ENCODE measurements at regions of chr7 and their contacts with region 1.

Region 1: DNA sequence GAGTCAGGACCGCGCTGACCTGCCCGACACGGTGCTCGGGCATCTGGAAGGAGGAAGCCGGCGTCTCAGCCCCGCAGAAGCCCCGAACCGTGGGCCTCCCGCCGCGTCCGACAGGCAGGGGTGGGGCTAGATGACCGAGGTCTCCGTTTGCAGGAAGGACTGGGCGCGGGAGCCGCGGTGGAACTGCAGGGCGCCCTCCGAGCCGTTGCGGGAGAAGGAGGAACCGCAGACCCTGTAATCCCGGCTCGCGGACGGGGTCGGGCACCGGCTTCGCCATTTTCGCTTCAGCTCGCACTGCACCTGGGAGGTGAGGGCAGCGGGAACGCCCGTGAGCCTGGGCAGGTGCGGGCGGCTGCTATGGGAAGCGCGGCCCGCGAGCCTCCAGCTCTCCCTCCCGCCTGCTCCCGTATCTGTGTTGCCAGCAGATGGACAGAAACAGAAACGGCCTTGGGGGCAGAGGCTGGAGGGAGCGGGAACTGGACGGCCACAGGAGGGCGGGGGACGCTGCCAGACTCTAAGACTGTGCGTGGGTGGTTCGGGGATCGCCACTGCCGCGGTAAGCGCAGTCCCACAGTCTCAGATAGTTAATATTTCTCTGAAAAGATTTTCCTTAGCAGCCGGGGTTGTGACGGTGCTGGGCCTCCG is 114.1 kb downstream of the VIPR2 start:
- DNase-seq: peak; percentile 60 to 62
- ATAC-seq: peak; percentile 53 to 77 (median 69)
- H3K4me3 ChIP-seq: peak overlapping the region; percentile 32 to 67 (median 56)
- H3K27ac ChIP-seq: peak overlapping the region; percentile 34 to 84 (median 75)
- H3K4me1 ChIP-seq: peaks cover 0 to 37% (median 17%) of the 10 kb centered on the region in 9 donors
- H3K27me3 ChIP-seq: peaks cover 0 to 25% (median 0%) of the 10 kb centered on the region in 7 donors
- CTCF ChIP-seq: peak in 8 of 9 donors; percentile 7 to 58 (median 46)

Region 2: DNA sequence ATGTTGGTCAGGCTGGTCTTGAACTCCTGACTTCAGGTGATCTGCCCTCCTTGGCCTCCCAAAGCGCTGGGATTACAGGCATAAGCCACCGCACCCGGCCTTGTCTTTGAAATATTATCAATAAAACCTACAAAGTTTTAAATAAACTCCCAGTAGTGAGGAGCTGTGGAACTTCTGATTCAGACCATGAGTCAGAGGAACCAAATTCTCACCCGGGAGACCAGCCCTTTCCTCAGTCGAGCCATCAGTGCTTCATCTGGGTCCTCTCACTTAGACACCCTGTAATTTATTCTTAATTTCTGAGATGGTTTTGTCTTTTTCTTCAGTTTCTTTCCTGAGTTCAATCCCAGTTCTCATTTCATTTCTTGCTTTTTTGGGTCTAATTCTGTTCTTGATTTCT is 105.7 kb before region 1 on chr7:
- intact Hi-C with region 1: no loop called
- DNase-seq: no peak
- ATAC-seq: no peak
- H3K4me3 ChIP-seq: no peak overlapping the region
- H3K27ac ChIP-seq: no peak overlapping the region
- H3K4me1 ChIP-seq: peaks cover 0 to 6% (median 0%) of the 10 kb centered on the region in 9 donors
- H3K27me3 ChIP-seq: no peaks in the 10 kb centered on the region
- CTCF ChIP-seq: no peak

Region 3: GRCh38 chr7:158944649-158945349 is 85.8 kb before region 1 on chr7:
- intact Hi-C with region 1: no loop called
- DNase-seq: no peak
- ATAC-seq: peak in 2 of 8 donors; percentile 12 to 20
- H3K4me3 ChIP-seq: no peak overlapping the region
- H3K27ac ChIP-seq: no peak overlapping the region
- H3K4me1 ChIP-seq: no peaks in the 10 kb centered on the region
- H3K27me3 ChIP-seq: no peaks in the 10 kb centered on the region
- CTCF ChIP-seq: no peak

Region 4: DNA sequence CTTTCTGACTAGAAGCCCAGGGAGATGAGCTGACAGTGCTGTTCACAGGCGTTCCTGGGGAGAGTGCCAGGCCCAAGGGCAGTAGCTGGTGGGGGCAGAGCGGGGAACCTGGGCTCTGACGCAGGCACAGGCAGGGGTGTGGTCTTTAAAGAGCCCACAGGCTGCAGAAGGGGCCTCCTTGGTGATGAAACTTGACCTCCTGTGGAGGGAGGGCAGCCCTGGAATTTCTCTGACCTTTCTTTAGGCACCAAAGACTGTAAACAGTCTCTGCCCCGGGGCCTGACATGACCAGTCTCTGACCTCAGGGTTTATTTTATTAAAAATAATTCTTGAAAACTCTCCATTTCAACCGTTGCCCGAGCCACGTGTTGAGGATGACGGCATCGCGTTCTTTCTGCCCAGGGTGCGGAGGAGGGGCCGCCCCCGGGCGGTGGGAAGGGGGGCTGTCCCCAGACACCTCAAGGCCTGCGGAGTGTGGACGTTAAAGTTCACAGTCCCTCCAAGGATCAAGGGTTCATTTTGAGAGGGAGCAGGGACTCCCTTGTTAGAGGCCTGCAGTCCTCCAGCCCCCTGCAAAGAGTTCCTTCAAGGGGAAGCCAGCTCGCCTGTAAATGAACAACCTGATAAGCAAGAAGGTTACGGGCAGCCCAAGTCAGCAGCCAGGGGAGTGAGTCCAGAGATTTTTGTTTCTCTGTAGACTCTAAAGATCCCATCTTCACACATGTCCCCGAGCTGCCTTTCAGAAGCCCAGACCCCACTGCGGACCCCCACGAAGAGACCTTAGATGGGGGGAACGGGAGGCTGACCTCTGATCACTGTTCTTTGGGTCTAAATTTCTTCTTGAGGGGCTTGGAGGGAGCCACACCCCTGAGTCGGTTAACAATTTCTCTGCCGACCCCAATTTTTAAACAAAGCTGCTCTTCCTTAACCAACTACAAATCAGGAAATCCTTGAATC is 14.9 kb before region 1 on chr7:
- intact Hi-C with region 1: no loop called
- DNase-seq: peak; percentile 66 to 73
- ATAC-seq: peak; percentile 62 to 93 (median 84)
- H3K4me3 ChIP-seq: no peak overlapping the region
- H3K27ac ChIP-seq: peak overlapping the region; percentile 17 to 85 (median 75)
- H3K4me1 ChIP-seq: peaks cover 0 to 46% (median 31%) of the 10 kb centered on the region in 9 donors
- H3K27me3 ChIP-seq: no peaks in the 10 kb centered on the region
- CTCF ChIP-seq: no peak

Region 5: DNA sequence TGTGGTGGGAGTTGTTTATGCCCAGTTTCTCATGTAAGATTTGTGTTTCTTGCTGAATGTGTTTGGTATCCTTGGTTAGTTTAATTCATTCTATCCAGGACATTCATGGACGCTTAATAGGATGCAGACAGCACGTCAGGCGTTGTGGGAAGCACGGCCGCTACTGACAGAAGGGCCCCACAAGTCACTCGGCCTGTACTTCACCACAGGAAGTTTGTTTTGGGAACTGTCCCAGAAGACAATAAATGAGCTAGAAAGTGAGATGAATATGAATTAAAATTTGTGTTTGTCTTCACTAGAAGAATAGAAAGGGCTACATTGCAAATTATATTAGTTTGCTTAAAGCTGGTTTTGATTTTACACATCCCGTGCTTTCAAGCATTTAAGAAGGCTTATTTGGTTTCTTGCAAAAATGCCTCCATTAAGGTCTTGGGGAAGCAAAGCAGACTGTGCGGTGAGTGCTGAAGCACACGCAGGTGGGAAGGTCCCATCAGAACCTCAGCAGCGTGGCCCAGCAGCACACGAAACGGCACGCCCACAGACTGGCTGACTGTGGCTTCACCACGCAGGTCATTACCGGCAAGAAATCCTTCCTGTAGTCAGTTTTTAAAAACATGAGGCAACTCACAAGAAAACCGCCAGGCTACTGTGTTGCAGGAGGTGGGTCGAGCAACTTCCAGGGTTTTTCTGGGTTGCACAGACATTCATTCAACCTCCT is 40.0 kb after region 1 on chr7:
- intact Hi-C with region 1: loop called in 1 of 10 experiments (anchors 10 kb)
- DNase-seq: no peak
- ATAC-seq: peak in 4 of 8 donors; percentile 27 to 56 (median 44)
- H3K4me3 ChIP-seq: no peak overlapping the region
- H3K27ac ChIP-seq: peak overlapping the region in 9 of 10 donors; percentile 49 to 91 (median 79)
- H3K4me1 ChIP-seq: peaks cover 6 to 59% (median 36%) of the 10 kb centered on the region in 9 donors
- H3K27me3 ChIP-seq: no peaks in the 10 kb centered on the region
- CTCF ChIP-seq: no peak

Measured in heart right ventricle (tissue), 16 donors.